Panc1 (cell line): ENCODE measurements at regions of chr14 and their contacts with region 1.

Region 1: DNA sequence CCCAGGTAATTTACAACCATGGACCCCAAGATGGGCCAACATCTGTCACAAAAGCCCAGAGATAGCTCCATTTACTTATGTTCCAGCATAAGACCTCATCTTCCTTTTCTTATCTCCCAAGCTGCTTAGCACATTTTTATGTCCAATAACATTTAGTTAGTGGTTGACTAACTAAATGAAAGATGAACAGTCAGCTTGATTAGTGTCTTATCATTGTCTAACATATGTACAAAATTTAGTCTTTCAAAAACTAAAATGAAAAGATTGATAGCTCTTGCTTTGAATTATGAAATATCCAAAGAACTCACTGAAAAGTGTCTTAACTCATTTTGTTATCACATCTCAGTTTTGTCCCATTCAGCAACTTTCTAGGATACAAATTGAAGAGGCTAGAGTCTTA is 163.1 kb upstream of the EGLN3 start:
- DNase-seq: no peak
- ATAC-seq: no peak
- H3K4me3 ChIP-seq: no peak overlapping the region
- H3K27ac ChIP-seq: peak overlapping the region; percentile 12; the same call in 1 of the 2 replicates
- H3K4me1 ChIP-seq: peaks cover 11% of the 10 kb centered on the region
- H3K27me3 ChIP-seq: no peaks in the 10 kb centered on the region
- CTCF ChIP-seq: no peak

Region 2: DNA sequence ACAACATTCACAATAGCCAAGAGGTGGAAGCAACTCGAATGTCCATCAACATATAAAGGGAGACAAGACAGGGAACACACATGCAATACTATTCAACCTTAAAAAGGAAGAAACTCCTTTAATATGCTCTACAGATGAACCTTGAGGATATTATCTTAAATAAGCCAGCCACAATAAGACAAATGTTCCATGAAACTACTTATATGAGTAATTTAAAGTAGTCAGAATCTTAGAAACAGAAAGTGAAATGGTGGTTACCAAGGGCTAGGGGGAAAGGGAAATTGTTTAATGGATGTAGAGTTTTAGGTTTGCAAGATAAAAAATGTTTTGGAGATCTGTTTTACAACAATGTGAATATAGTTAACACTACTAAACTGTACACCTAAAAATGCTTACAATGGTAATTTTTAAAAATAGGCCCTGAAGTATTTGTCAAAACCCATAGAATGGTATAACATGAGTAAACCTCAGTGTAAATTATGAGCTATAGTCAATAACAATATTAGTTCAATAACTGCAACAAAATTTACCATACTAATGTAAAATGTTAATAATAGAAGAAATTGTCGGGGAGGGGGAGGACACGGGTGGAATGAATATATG is 234.2 kb before region 1 on chr14:
- CTCF ChIA-PET with region 1: no interaction called
- POLR2A ChIA-PET with region 1: no interaction called
- in situ Hi-C with region 1: no loop called
- intact Hi-C with region 1: no loop called
- DNase-seq: no peak
- ATAC-seq: no peak
- H3K4me3 ChIP-seq: no peak overlapping the region
- H3K27ac ChIP-seq: no peak overlapping the region
- H3K4me1 ChIP-seq: no peaks in the 10 kb centered on the region
- H3K27me3 ChIP-seq: no peaks in the 10 kb centered on the region
- CTCF ChIP-seq: no peak

Region 3: GRCh38 chr14:34199564-34199963 is 85.6 kb after region 1 on chr14:
- CTCF ChIA-PET with region 1: interaction called, 12 read pairs
- POLR2A ChIA-PET with region 1: no interaction called
- in situ Hi-C with region 1: no loop called
- intact Hi-C with region 1: no loop called
- DNase-seq: no peak
- ATAC-seq: no peak
- H3K4me3 ChIP-seq: no peak overlapping the region
- H3K27ac ChIP-seq: no peak overlapping the region
- H3K4me1 ChIP-seq: no peaks in the 10 kb centered on the region
- H3K27me3 ChIP-seq: no peaks in the 10 kb centered on the region
- CTCF ChIP-seq: no peak